ENCODE measurements at regions of chr6 and their contacts with region 1.

Region 1: GRCh38 chr6:3124667-3125066 is 6.2 kb downstream of the BPHL start:
- DNase-seq: no peak
- ATAC-seq: no peak
- H3K4me3 ChIP-seq: no peak overlapping the region
- H3K4me1 ChIP-seq: peaks cover under 1% of the 10 kb centered on the region
- CTCF ChIP-seq: no peak

Region 2: GRCh38 chr6:3251462-3252314 is 127.0 kb after region 1 on chr6:
- intact Hi-C with region 1: loop called (anchors 5 to 10 kb)
- DNase-seq: peak; percentile 80 to 92 (median 89)
- ATAC-seq: peak; percentile 92
- H3K4me3 ChIP-seq: no peak overlapping the region
- H3K4me1 ChIP-seq: no peaks in the 10 kb centered on the region
- CTCF ChIP-seq: peak; percentile 95

Region 3: GRCh38 chr6:3258720-3259490 is 134.2 kb after region 1 on chr6 and contains the start of gene PSMG4:
- intact Hi-C with region 1: loop called (anchors 5 to 10 kb)
- DNase-seq: peak; percentile 96 to 99 (median 97)
- ATAC-seq: peak; percentile 98
- H3K4me3 ChIP-seq: peak within 1 kb of the TSS; percentile 82
- H3K4me1 ChIP-seq: peaks cover 9% of the 10 kb centered on the region
- CTCF ChIP-seq: no peak
- total RNA-seq, gene PSMG4: 14.8 to 19.8 (median 16.2) TPM